Activated CD8-positive, alpha-beta T cell treated with anti-CD3 and anti-CD28 coated beads for 36 hours (primary cell): ENCODE measurements at regions of chr16 and their contacts with region 1.

Region 1: GRCh38 chr16:29973384-29974246 is at the start of gene TAOK2:
- DNase-seq: peak; percentile 98
- ATAC-seq: peak; percentile 99
- H3K4me3 Mint-ChIP-seq: peak within 1 kb of the TSS; percentile 80
- H3K27ac Mint-ChIP-seq: peak within 1 kb of the TSS; percentile 91
- H3K4me1 Mint-ChIP-seq: peaks cover 30% of the 10 kb centered on the region
- H3K27me3 Mint-ChIP-seq: no peaks in the 10 kb centered on the region
- CTCF ChIP-seq: no peak
- total RNA-seq, gene TAOK2: 25.0 to 25.9 TPM

Region 2: DNA sequence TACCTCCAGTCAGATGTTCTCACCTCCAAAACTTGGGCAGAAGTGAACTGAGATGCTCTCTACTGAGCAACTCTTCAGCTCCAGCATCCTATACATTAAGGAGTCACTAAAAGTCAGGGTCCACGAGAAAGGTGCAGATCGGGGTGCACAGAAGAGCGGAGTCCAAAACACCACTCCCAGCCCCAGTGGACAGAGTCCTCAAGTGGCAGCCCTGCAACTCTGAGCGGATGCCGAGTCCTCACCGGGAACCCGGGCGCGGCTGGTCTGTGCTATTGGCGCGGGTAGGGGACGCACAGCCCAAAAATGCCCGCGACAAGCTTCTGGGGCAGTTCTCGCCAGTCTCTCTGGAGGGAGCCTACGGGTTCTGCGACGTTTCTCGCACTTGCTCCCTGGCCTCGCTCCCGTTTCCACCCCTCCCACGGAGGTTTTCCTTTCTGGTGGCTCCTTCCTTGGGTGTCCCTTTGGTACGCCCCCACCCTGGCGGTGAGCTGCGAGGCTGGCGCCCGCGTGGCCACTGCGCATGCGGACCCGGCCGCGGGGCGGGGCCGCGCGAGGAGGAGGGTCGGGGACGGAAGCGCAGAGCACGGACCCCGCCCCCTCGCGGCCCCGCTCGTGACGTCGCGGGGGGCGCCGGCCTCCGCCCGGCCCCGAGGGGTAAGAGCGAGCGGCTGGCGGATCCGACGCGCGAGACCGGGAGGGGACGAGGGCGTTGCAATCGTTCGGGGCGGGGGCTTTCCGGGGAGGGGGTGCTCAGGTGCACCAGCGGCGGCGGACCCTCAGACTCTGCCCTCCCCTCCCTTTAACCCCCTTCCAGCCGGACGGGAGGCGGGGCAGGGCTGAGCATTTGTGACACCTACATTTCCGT is 11.9 kb before region 1 on chr16 and contains the start of gene TMEM219:
- CTCF ChIA-PET with region 1: interaction called, 20 read pairs
- POLR2A ChIA-PET with region 1: interaction called, 19 read pairs
- intact Hi-C with region 1: no loop called
- DNase-seq: peak; percentile 91
- ATAC-seq: peak; percentile 96
- H3K4me3 Mint-ChIP-seq: peak within 1 kb of the TSS; percentile 86
- H3K27ac Mint-ChIP-seq: peak within 1 kb of the TSS; percentile 87
- H3K4me1 Mint-ChIP-seq: peaks cover 19% of the 10 kb centered on the region
- H3K27me3 Mint-ChIP-seq: no peaks in the 10 kb centered on the region
- CTCF ChIP-seq: peak; percentile 23
- total RNA-seq, gene TMEM219: 31.9 to 34.9 TPM